ENCODE measurements at regions of chr7 and their contacts with region 1.

Region 1: DNA sequence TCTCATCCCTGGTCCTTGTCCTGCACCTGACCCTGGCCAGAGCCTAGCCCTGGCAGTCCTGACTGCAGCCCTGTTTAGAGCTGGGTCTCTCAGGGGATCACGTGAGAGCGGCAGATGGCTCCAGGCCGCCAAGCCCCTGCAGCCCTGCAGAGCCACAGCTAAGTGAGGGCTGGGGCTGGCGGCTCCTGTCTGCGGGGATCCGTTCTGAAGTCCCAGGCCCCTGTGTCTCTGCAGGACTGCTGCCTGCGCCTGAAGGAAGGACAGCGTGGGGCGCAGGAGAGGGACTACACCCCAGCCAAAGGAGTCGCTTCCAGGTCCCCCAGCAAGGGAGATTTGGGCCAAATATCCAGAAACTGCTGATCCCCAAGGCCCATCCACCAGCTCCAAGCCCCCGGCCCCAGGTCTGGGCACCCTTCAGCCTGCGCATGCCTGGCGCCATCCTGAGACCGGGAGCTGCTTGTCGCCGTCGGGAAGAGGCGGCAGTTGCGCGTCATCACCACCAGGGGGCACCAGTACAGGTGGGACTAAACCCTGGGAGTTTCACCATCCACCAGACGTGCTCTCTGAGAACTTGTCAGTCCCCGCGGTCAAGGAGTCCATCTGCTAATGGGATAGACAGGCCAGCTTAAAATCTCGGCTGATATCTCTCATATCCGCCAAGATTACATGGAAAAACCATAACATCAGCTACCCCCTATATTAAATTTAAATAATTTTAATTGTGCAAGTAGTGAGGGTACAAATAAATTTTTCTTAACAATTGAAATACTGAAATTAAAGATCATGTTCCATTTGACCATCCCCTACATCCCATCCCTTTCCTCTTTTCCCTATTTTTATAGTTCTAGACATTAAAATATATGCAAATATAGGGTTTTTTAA is 25.1 kb upstream of the GHRHR start:
- DNase-seq: peak; percentile 60 to 88
- H3K4me3 ChIP-seq: no peak overlapping the region
- H3K27ac ChIP-seq: no peak overlapping the region
- H3K4me1 ChIP-seq: peaks cover 19% of the 10 kb centered on the region
- H3K27me3 ChIP-seq: peaks cover 9% of the 10 kb centered on the region; the same call in 1 of the 2 replicates
- CTCF ChIP-seq: peak; percentile 99

Region 2: GRCh38 chr7:30659312-30659711 is 279.4 kb before region 1 on chr7:
- CTCF ChIA-PET with region 1: no interaction called
- POLR2A ChIA-PET with region 1: no interaction called
- intact Hi-C with region 1: no loop called
- DNase-seq: no peak
- H3K4me3 ChIP-seq: no peak overlapping the region
- H3K27ac ChIP-seq: no peak overlapping the region
- H3K4me1 ChIP-seq: no peaks in the 10 kb centered on the region
- H3K27me3 ChIP-seq: peaks cover 53% of the 10 kb centered on the region
- CTCF ChIP-seq: no peak

Region 3: GRCh38 chr7:30814700-30815387 is 123.8 kb before region 1 on chr7:
- CTCF ChIA-PET with region 1: interaction called, 10 read pairs
- POLR2A ChIA-PET with region 1: no interaction called
- intact Hi-C with region 1: no loop called
- DNase-seq: no peak
- H3K4me3 ChIP-seq: no peak overlapping the region
- H3K27ac ChIP-seq: no peak overlapping the region
- H3K4me1 ChIP-seq: peaks cover 10% of the 10 kb centered on the region
- H3K27me3 ChIP-seq: no peaks in the 10 kb centered on the region
- CTCF ChIP-seq: no peak

Region 4: DNA sequence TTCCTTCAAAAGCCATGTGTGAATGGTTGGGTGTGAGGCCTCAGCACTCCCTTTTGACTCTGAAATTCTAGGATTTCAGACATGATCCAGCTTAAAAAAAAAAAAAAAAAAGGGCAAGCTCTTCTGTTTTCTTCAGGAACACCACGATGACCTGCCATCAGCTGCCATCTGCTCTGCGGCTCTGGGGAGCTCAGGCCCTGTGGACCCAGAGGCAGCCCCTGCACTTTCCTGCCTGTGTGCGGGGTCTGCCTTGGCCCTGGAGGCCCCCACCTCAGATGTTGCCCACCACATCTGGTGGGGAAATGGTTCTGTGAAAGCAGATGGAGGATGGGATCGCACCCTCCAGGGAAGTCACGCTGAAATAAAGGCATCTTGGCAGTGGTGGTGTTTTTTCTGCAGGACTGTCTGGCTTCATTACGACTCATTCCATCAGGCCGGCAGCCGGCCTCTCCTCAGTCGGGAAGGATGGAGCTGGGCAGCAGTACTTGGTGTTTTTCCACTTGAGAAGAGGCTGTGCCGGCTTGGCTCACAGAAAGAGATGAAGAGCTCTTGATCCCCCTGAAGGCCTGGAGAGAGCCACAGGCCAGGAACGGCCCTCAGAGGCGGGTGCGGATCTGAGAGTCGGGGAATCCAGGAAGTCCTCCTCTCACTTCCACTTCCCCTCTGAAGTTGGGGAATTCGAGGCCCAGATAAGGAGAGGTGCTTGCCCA is 93.1 kb before region 1 on chr7:
- CTCF ChIA-PET with region 1: no interaction called
- POLR2A ChIA-PET with region 1: no interaction called
- intact Hi-C with region 1: loop called (anchors 5 kb)
- DNase-seq: peak; percentile 19 to 62
- H3K4me3 ChIP-seq: no peak overlapping the region
- H3K27ac ChIP-seq: peak overlapping the region; percentile 66
- H3K4me1 ChIP-seq: peaks cover 20% of the 10 kb centered on the region
- H3K27me3 ChIP-seq: no peaks in the 10 kb centered on the region
- CTCF ChIP-seq: no peak

Region 5: GRCh38 chr7:30896783-30897637 is 41.7 kb before region 1 on chr7:
- CTCF ChIA-PET with region 1: interaction called, 14 read pairs
- POLR2A ChIA-PET with region 1: no interaction called
- intact Hi-C with region 1: no loop called
- DNase-seq: no peak
- H3K4me3 ChIP-seq: no peak overlapping the region
- H3K27ac ChIP-seq: no peak overlapping the region
- H3K4me1 ChIP-seq: peaks cover 18% of the 10 kb centered on the region
- H3K27me3 ChIP-seq: no peaks in the 10 kb centered on the region
- CTCF ChIP-seq: no peak

Region 6: GRCh38 chr7:30974605-30975255 is 36.1 kb after region 1 on chr7:
- CTCF ChIA-PET with region 1: interaction called, 5 read pairs
- POLR2A ChIA-PET with region 1: no interaction called
- intact Hi-C with region 1: loop called (anchors 1 kb)
- DNase-seq: peak; percentile 52 to 74
- H3K4me3 ChIP-seq: no peak overlapping the region
- H3K27ac ChIP-seq: no peak overlapping the region
- H3K4me1 ChIP-seq: no peaks in the 10 kb centered on the region
- H3K27me3 ChIP-seq: peaks cover 40% of the 10 kb centered on the region
- CTCF ChIP-seq: peak; percentile 88